MCF 10A (cell line): ENCODE measurements at regions of chr17 and their contacts with region 1.

Region 1: DNA sequence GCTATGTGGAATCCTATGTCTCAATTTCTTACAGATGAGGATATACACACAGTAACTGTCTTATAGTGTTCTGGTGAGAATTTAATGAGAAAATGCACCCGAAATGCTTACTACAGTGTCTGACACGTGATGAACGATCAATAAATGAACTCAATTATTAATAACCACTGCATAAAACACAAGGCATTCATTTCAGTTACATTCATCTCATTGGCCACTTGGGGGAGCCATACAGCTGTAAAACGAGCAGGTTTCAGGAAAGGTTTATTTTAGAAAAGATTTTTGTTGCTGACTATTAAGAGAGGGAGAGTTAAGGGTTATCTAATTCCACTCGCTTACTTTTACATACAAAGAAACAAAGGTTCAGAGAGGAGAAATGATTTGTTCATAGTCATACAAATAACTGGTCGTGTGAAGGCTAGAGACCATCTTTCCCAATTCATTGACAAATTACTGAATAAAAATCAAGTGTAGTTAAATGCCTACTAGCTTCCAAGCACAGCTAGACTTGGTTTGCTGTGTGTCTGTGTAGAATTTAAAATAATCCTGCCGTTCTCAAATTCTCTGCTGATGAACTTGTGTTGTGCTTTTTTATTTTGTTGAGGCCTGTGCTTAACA is 160.1 kb downstream of the MAP2K4 start:
- DNase-seq: peak; percentile 73
- H3K4me3 Mint-ChIP-seq: no peak overlapping the region
- H3K27ac Mint-ChIP-seq: no peak overlapping the region
- H3K4me1 Mint-ChIP-seq: no peaks in the 10 kb centered on the region
- H3K27me3 Mint-ChIP-seq: no peaks in the 10 kb centered on the region
- CTCF ChIP-seq: peak; percentile 72

Region 2: GRCh38 chr17:12024319-12024718 is 156.4 kb before region 1 on chr17:
- CTCF ChIA-PET with region 1: no interaction called
- POLR2A ChIA-PET with region 1: no interaction called
- intact Hi-C with region 1: no loop called
- DNase-seq: peak; percentile 81
- H3K4me3 Mint-ChIP-seq: peak overlapping the region; percentile 28
- H3K27ac Mint-ChIP-seq: peak overlapping the region; percentile 59
- H3K4me1 Mint-ChIP-seq: peaks cover 40% of the 10 kb centered on the region
- H3K27me3 Mint-ChIP-seq: no peaks in the 10 kb centered on the region
- CTCF ChIP-seq: no peak

Region 3: DNA sequence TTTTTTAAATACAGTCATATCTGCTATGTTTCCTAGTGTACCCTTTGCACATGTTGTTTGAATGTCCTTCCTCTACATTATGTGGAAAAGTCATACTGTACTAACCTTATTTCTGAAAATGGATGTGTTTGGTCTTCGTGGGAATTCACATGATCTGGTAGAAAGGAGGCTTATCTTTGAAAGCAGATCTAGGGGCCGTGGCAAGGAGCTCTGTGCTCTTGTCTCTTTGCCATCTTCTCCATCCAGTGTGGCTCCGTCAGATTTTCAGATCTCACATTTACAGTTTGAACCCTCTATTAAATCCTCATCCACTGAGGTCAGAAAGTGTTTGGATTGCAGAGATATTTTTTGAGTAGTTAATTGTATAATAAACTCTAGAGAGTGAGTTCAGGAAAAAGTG is 127.2 kb before region 1 on chr17:
- CTCF ChIA-PET with region 1: no interaction called
- POLR2A ChIA-PET with region 1: no interaction called
- intact Hi-C with region 1: no loop called
- DNase-seq: no peak
- H3K4me3 Mint-ChIP-seq: no peak overlapping the region
- H3K27ac Mint-ChIP-seq: no peak overlapping the region
- H3K4me1 Mint-ChIP-seq: peaks cover 19% of the 10 kb centered on the region
- H3K27me3 Mint-ChIP-seq: no peaks in the 10 kb centered on the region
- CTCF ChIP-seq: no peak

Region 4: DNA sequence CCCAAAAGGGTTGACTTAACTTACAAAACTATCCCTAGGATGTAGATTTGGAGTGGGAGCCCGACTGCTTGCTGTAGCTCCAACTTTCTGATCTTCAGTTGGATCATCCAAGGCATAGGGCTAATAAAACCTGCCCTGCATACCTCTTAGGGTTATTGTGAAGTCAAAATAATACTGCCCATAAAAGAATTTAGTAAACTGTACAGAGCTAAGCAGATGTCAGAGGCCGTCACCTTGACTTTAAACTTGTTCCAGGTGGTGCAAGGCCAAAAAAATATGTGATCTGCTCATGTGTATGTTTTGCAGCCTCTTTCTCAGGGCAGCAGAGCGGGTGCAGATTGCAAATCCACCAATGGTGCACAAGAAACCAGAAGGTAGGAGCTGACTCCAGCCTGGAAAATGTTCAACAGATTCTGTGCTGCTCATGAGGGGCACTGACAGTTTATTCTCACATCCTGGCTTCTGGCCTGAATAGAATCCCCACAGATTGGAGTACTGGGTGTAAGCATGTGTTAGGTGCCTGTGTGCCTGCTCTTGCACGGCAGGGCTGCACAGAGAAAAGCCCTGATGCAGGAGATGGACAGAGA is 20.6 kb after region 1 on chr17:
- CTCF ChIA-PET with region 1: interaction called, 14 read pairs
- POLR2A ChIA-PET with region 1: no interaction called
- intact Hi-C with region 1: no loop called
- DNase-seq: no peak
- H3K4me3 Mint-ChIP-seq: no peak overlapping the region
- H3K27ac Mint-ChIP-seq: no peak overlapping the region
- H3K4me1 Mint-ChIP-seq: no peaks in the 10 kb centered on the region
- H3K27me3 Mint-ChIP-seq: peaks cover 6% of the 10 kb centered on the region
- CTCF ChIP-seq: no peak

Region 5: GRCh38 chr17:12667299-12667958 is 486.7 kb after region 1 on chr17:
- CTCF ChIA-PET with region 1: interaction called, 12 read pairs
- POLR2A ChIA-PET with region 1: interaction called, 3 read pairs
- intact Hi-C with region 1: loop called (anchors 1 kb)
- DNase-seq: peak; percentile 51
- H3K4me3 Mint-ChIP-seq: no peak overlapping the region
- H3K27ac Mint-ChIP-seq: no peak overlapping the region
- H3K4me1 Mint-ChIP-seq: no peaks in the 10 kb centered on the region
- H3K27me3 Mint-ChIP-seq: peaks cover 14% of the 10 kb centered on the region
- CTCF ChIP-seq: peak; percentile 30

Region 6: DNA sequence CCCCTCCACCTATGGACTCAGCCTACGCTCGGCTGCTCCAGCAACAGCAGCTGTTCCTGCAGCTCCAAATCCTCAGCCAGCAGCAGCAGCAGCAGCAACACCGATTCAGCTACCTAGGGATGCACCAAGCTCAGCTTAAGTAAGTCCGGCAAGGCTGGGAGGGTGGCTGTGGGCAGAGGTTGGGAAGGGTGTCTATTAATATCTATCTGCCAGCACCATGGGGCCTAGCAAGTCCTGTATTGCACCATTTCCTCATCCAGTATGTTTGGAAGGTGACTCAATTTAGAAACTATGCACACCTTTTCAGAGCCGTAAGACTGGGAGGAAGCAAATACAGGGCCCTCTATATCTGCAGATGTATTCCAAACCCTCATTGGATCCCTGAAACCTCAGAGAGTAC is 563.5 kb after region 1 on chr17:
- CTCF ChIA-PET with region 1: interaction called, 15 read pairs
- POLR2A ChIA-PET with region 1: no interaction called
- intact Hi-C with region 1: loop called (anchors 1 kb)
- DNase-seq: peak; percentile 69
- H3K4me3 Mint-ChIP-seq: no peak overlapping the region
- H3K27ac Mint-ChIP-seq: no peak overlapping the region
- H3K4me1 Mint-ChIP-seq: no peaks in the 10 kb centered on the region
- H3K27me3 Mint-ChIP-seq: peaks cover 23% of the 10 kb centered on the region
- CTCF ChIP-seq: no peak